ENCODE measurements at regions of chr2 and their contacts with region 1.

Region 1: GRCh38 chr2:20141122-20141762 is 83.7 kb downstream of the SDC1 start:
- DNase-seq: peak; percentile 86
- H3K4me3 ChIP-seq: no peak overlapping the region
- H3K27ac ChIP-seq: peak overlapping the region in 2 of 4 donors; percentile 60 to 65
- H3K4me1 ChIP-seq: peaks cover 0 to 8% (median 0%) of the 10 kb centered on the region in 4 donors
- H3K27me3 ChIP-seq: no peaks in the 10 kb centered on the region
- CTCF ChIP-seq: no peak
- EP300 ChIP-seq: peak in 1 of 4 donors; percentile 84
- POLR2A ChIP-seq: no peak

Region 2: GRCh38 chr2:20224716-20225293 is 83.6 kb after region 1 on chr2 and contains the start of gene SDC1:
- intact Hi-C with region 1: loop called (anchors 5 kb)
- DNase-seq: peak; percentile 63
- H3K4me3 ChIP-seq: peak within 1 kb of the TSS; percentile 29 to 65 (median 58)
- H3K27ac ChIP-seq: peak within 1 kb of the TSS; percentile 47 to 71 (median 52)
- H3K4me1 ChIP-seq: peaks cover 0 to 28% (median 23%) of the 10 kb centered on the region in 4 donors
- H3K27me3 ChIP-seq: no peaks in the 10 kb centered on the region
- CTCF ChIP-seq: no peak
- EP300 ChIP-seq: no peak
- POLR2A ChIP-seq: no peak
- total RNA-seq, gene SDC1: 0.33 to 1.5 (median 0.36) TPM in 3 of 4 donors, not detected in the other